ENCODE measurements at regions of chr1 and their contacts with region 1.

Region 1: DNA sequence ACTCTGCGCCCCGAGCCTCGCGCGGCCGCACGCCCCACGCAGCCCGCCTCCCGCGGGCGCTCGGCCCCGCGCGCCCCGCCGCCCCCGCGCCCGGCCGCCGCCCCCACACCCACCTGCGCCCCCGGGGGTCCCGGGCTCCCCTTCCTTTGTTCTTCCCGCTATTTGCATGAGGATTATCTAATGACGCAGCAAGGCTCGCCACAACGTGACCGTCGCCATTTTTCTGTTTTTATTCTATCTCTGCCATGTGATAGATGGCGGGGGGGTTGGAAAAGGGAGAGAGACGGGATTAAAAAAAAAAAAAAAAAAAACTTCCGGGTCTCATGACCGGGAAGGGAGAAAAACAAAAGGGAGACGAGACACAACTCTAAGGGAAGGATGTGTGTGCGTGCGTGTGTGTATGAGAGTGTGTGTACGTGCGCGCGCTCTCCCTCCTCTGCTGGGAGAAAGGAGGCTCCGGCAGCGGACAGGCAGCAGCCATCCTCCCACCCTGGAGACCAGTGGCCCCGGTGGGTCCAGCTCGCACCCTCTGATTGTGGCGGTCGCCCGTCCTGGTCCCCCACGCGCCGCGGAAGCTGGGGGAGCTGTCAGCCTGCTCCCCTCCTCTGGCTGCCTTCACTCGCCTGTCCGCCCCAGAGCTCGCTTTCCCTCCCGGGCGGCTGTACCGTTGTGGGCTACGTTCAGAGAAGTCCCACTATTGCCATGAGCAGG is 80.4 kb upstream of the AK4 start:
- DNase-seq: peak; percentile 84
- H3K4me3 Mint-ChIP-seq: peak overlapping the region; percentile 85
- H3K27ac Mint-ChIP-seq: peak overlapping the region; percentile 97
- H3K4me1 Mint-ChIP-seq: peaks cover 33% of the 10 kb centered on the region
- H3K27me3 Mint-ChIP-seq: no peaks in the 10 kb centered on the region

Region 2: GRCh38 chr1:64616039-64616438 is 451.6 kb before region 1 on chr1:
- intact Hi-C with region 1: no loop called
- DNase-seq: no peak
- H3K4me3 Mint-ChIP-seq: no peak overlapping the region
- H3K27ac Mint-ChIP-seq: no peak overlapping the region
- H3K4me1 Mint-ChIP-seq: no peaks in the 10 kb centered on the region
- H3K27me3 Mint-ChIP-seq: peaks cover 2% of the 10 kb centered on the region

Region 3: GRCh38 chr1:64966158-64966971 is 101.3 kb before region 1 on chr1 and contains the start of gene JAK1:
- intact Hi-C with region 1: loop called (anchors 2 kb)
- DNase-seq: peak; percentile 96
- H3K4me3 Mint-ChIP-seq: peak within 1 kb of the TSS; percentile 85
- H3K27ac Mint-ChIP-seq: peak within 1 kb of the TSS; percentile 89
- H3K4me1 Mint-ChIP-seq: peaks cover 51% of the 10 kb centered on the region
- H3K27me3 Mint-ChIP-seq: peaks cover 2% of the 10 kb centered on the region
- total RNA-seq, gene JAK1: 86.5 and 86.6 TPM in 2 replicates

Region 4: GRCh38 chr1:65148548-65149350 is 81.1 kb after region 1 on chr1:
- intact Hi-C with region 1: loop called (anchors 1 kb)
- DNase-seq: peak; percentile 90
- H3K4me3 Mint-ChIP-seq: peak overlapping the region; percentile 93
- H3K27ac Mint-ChIP-seq: peak overlapping the region; percentile 96
- H3K4me1 Mint-ChIP-seq: peaks cover 41% of the 10 kb centered on the region
- H3K27me3 Mint-ChIP-seq: peaks cover 13% of the 10 kb centered on the region

Region 5: GRCh38 chr1:65230731-65231481 is 163.3 kb after region 1 on chr1:
- intact Hi-C with region 1: loop called (anchors 2 kb)
- DNase-seq: no peak
- H3K4me3 Mint-ChIP-seq: peak overlapping the region; percentile 71
- H3K27ac Mint-ChIP-seq: peak overlapping the region; percentile 93
- H3K4me1 Mint-ChIP-seq: peaks cover 28% of the 10 kb centered on the region
- H3K27me3 Mint-ChIP-seq: no peaks in the 10 kb centered on the region

Region 6: GRCh38 chr1:65372557-65372956 is 304.9 kb after region 1 on chr1:
- intact Hi-C with region 1: no loop called
- DNase-seq: no peak
- H3K4me3 Mint-ChIP-seq: no peak overlapping the region
- H3K27ac Mint-ChIP-seq: no peak overlapping the region
- H3K4me1 Mint-ChIP-seq: no peaks in the 10 kb centered on the region
- H3K27me3 Mint-ChIP-seq: peaks cover 4% of the 10 kb centered on the region

Region 7: GRCh38 chr1:65948609-65949229 is 881.1 kb after region 1 on chr1:
- intact Hi-C with region 1: no loop called
- DNase-seq: no peak
- H3K4me3 Mint-ChIP-seq: no peak overlapping the region
- H3K27ac Mint-ChIP-seq: no peak overlapping the region
- H3K4me1 Mint-ChIP-seq: peaks cover 7% of the 10 kb centered on the region
- H3K27me3 Mint-ChIP-seq: peaks cover 10% of the 10 kb centered on the region

Measured in activated CD4-positive, alpha-beta T cell treated with anti-CD3 and anti-CD28 coated beads, Interleukin-2, amount 10 ng/mL, durations not matched to agents 24 days and 14 days (primary cell).